WTC11 (cell line): ENCODE measurements at regions of chr11 and their contacts with region 1.

Region 1: DNA sequence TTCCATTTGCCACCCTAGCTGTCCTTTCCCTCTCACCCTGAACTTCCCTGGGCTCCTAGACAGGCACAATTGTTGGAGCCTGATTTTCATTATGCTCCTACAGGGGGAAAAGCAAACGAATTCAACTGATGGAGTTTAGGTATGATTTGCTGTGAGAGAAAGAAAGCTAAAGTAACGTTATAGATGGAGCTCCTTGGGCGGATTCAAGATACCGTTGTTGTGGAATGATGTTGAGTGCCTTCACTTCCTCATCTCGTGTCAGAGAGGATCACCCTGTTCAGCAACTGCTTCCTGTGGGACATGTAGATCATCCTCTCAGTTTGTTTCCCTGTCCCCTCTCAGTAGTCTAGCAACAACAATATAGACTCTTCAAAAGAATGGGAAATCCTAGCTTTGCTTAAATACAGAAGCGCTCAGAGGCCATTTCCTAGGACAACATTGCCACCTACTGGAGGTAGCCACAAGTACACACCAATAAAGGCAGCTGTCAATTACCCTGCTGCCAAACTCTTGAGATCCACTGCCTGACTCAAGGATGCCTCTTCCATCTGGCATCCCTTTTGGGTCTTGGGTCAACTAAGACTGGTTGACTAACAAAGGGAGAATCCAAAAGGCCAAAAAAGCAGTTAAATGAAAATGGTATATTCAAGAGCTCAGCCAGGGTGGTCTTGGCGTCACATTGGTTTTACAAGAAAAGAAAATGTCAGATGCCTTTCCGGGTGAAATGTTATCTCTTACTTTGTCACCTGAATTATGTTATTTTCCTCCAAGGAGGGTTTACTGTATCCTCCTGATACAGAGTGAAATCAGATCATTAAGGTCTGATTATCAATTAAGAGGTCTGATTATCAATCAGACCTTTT is 13.5 kb upstream of the DTX4 start:
- DNase-seq: peak; percentile 54
- ATAC-seq: peak; percentile 96
- H3K4me3 Mint-ChIP-seq: no peak overlapping the region
- H3K27ac Mint-ChIP-seq: no peak overlapping the region
- H3K4me1 Mint-ChIP-seq: peaks cover 8% of the 10 kb centered on the region
- H3K27me3 Mint-ChIP-seq: no peaks in the 10 kb centered on the region
- CTCF ChIP-seq: peak; percentile 54

Region 2: GRCh38 chr11:58629857-58630256 is 528.6 kb before region 1 on chr11:
- CTCF ChIA-PET with region 1: interaction called, 13 read pairs
- POLR2A ChIA-PET with region 1: no interaction called
- DNase-seq: no peak
- ATAC-seq: peak; percentile 85
- H3K4me3 Mint-ChIP-seq: no peak overlapping the region
- H3K27ac Mint-ChIP-seq: no peak overlapping the region
- H3K4me1 Mint-ChIP-seq: peaks cover 2% of the 10 kb centered on the region
- H3K27me3 Mint-ChIP-seq: no peaks in the 10 kb centered on the region
- CTCF ChIP-seq: no peak; the same call in 1 of the 2 replicates

Region 3: DNA sequence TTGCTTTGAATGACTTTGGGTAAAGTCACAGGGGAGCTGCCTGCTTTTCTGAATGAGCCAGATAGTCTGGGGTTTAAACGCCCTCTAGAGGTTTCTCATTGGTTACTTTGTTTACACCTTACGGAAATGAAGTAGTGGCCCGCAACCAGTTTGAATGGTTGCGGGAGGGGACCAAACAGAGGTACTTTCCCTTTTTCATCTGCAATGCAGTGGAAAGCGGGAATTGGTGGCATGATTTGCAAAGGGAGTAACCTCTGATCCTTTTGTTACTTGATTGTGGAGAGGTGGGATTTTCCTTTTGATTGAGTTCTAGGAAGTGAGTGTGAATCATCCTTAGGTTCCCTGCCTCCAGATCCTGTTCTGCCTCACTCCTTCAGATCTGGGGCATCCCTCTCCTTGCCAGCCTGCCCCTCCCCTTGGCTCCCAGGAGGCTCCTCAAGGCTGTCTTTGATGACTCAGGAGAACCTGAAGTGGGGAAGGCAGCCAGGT is 235.1 kb before region 1 on chr11:
- CTCF ChIA-PET with region 1: interaction called, 18 read pairs
- POLR2A ChIA-PET with region 1: no interaction called
- DNase-seq: peak; percentile 43
- ATAC-seq: peak; percentile 56
- H3K4me3 Mint-ChIP-seq: peak overlapping the region; percentile 63
- H3K27ac Mint-ChIP-seq: peak overlapping the region; percentile 94
- H3K4me1 Mint-ChIP-seq: peaks cover 48% of the 10 kb centered on the region
- H3K27me3 Mint-ChIP-seq: peaks cover under 1% of the 10 kb centered on the region; the same call in 1 of the 2 replicates
- CTCF ChIP-seq: no peak

Region 4: DNA sequence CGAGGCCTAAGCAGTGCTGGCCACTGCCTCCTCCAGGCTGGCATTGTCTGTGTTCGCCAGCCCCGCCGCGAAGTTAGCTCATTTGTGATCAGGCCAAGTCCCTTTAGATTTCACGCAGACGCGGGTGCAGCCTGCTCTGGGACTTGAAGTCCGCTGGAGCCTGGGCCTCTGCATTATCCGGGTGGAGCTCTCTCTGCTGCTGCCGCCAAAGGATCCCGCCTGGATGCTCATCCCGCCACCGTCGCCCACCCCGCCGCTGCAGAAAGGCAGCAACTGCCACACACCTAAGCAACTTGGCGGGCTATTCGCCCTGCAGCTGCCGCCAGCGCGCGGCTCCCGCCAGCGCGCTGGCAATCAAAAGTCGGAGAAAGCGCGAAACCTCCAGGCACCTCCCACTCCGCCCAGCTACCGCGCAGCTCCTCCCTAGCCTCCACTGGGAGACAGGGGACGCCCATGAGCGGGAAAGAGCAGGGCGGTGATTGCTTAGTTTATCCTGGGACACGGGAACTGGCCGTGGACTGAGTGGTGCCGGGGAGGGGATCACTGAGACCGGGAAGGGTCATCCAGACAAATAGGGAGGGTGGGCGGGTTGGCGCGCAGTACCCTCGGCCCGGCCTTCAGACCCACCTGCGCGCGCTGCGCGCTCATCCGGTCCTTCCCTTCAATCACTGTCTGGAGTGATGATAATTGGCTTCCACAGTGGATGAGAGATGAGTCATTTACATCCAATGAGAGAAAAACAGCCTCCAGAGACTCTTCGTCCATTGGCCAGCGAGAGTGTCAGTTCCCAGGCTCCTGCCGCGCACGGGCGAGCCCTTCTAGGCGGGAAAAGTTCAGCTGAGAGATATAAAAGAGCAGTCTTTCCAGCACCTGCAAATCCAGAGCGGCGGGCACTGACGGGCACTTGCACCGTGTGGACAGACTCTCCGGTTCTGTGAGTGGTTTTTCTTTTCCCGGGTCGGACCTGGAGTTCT is 51.8 kb before region 1 on chr11 and contains the start of gene FAM111B:
- CTCF ChIA-PET with region 1: interaction called, 14 read pairs
- POLR2A ChIA-PET with region 1: interaction called, 4 read pairs
- DNase-seq: peak; percentile 82
- ATAC-seq: peak; percentile 82
- H3K4me3 Mint-ChIP-seq: peak within 1 kb of the TSS; percentile 85
- H3K27ac Mint-ChIP-seq: no peak within 1 kb of the TSS; the same call in 1 of the 2 replicates
- H3K4me1 Mint-ChIP-seq: peaks cover 35% of the 10 kb centered on the region
- H3K27me3 Mint-ChIP-seq: peaks cover 51% of the 10 kb centered on the region
- CTCF ChIP-seq: no peak
- total RNA-seq, gene FAM111B: 16.3 to 25.5 TPM (median 17.7 TPM) in 3 replicates

Region 5: DNA sequence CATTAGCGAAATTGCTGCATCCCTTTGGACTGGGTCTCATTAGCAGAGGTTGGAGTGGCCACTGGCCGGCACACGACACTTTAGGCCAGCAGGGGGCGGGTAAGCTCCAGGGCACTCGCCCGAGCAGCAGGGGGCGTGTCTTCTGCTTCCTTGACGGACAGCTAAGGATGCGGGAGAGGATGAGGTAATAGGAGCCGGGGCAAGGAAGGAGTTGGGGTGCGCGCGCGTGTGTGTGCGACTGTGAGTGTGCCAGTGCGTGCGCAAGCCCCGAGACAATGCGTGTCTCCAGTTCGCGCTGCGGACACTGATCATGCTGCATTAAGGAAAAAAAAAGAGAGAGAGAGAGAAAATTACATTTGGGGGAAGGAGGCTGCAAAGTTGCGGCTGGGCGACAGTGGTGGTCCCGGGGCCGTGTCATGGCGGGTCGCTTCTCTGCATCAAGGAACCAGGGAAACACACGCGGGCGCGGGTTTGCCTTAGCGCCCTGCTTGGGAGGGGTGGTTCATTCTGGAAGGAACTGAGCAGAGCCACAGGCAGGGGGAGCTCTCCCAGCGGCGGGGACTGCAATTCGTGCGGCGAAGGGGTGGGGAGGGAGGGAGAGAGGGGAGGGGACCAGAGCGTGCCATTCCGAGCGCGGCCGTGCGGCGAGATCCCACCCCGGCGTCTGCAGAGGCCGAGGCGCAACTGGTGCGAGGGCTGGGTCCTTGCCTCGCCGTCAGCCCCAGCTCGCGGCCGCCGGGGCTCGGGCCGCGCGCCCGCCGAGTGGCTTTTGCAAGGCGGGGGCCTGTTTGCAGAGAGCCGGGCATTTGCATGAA is 13.3 kb after region 1 on chr11 and contains the start of gene DTX4:
- CTCF ChIA-PET with region 1: interaction called, 64 read pairs
- POLR2A ChIA-PET with region 1: interaction called, 5 read pairs
- DNase-seq: peak; percentile 96
- ATAC-seq: peak; percentile 58
- H3K4me3 Mint-ChIP-seq: peak within 1 kb of the TSS; percentile 90
- H3K27ac Mint-ChIP-seq: no peak within 1 kb of the TSS
- H3K4me1 Mint-ChIP-seq: peaks cover 26% of the 10 kb centered on the region
- H3K27me3 Mint-ChIP-seq: peaks cover 4% of the 10 kb centered on the region; the same call in 1 of the 2 replicates
- CTCF ChIP-seq: peak; percentile 83
- total RNA-seq, gene DTX4: 12.3 to 15.5 TPM (median 12.8 TPM) in 3 replicates

Region 6: DNA sequence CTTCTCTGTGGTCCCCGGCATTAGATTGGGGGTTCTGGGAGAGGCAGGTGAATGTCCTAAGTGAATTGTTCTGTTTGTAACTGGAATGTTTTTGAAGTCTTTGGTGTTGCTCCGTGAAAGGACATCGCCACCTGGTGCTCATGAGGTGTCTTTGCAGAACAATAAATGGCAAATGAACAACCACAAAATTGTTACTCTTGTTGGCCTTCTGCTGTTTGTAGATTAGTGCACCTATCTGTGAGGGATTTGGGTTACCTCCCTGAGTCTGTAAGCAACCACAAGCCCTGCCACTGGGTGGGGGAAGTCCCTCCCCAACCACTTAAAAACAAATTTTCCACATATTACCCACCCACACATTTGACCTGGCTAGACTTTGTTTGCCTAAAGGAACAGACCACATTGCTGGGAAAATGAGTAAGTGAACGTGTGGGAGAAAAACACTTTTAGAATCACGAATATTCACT is 49.6 kb after region 1 on chr11:
- CTCF ChIA-PET with region 1: interaction called, 14 read pairs
- POLR2A ChIA-PET with region 1: no interaction called
- DNase-seq: peak; percentile 15
- ATAC-seq: peak; percentile 47
- H3K4me3 Mint-ChIP-seq: no peak overlapping the region
- H3K27ac Mint-ChIP-seq: 0 out of 2 replicates have a peak overlapping the region, but pooled peaks have one; percentile 76
- H3K4me1 Mint-ChIP-seq: peaks cover 6% of the 10 kb centered on the region
- H3K27me3 Mint-ChIP-seq: no peaks in the 10 kb centered on the region; the same call in 1 of the 2 replicates
- CTCF ChIP-seq: peak; percentile 53